ENCODE measurements at regions of chr5 and their contacts with region 1.

Region 1: GRCh38 chr5:181260387-181261319 is at the start of gene TRIM52:
- DNase-seq: peak; percentile 95 to 98 (median 97)
- H3K4me3 ChIP-seq: peak within 1 kb of the TSS; percentile 84 to 97 (median 94)
- H3K27ac ChIP-seq: peak within 1 kb of the TSS; percentile 96 to 98
- H3K4me1 ChIP-seq: peaks cover 17 to 32% (median 30%) of the 10 kb centered on the region in 4 experiments
- H3K27me3 ChIP-seq: no peaks in the 10 kb centered on the region

Region 2: GRCh38 chr5:181181650-181182565 is 78.7 kb before region 1 on chr5:
- CTCF ChIA-PET with region 1: interaction called, 11 read pairs
- POLR2A ChIA-PET with region 1: no interaction called
- DNase-seq: peak; percentile 79 to 83 (median 80)
- H3K4me3 ChIP-seq: peak overlapping the region in 1 of 7 experiments; percentile 42
- H3K27ac ChIP-seq: no peak overlapping the region
- H3K4me1 ChIP-seq: peaks cover 0 to 22% (median 14%) of the 10 kb centered on the region in 4 experiments
- H3K27me3 ChIP-seq: peaks cover 0 to 5% (median 2%) of the 10 kb centered on the region in 5 experiments

Region 3: DNA sequence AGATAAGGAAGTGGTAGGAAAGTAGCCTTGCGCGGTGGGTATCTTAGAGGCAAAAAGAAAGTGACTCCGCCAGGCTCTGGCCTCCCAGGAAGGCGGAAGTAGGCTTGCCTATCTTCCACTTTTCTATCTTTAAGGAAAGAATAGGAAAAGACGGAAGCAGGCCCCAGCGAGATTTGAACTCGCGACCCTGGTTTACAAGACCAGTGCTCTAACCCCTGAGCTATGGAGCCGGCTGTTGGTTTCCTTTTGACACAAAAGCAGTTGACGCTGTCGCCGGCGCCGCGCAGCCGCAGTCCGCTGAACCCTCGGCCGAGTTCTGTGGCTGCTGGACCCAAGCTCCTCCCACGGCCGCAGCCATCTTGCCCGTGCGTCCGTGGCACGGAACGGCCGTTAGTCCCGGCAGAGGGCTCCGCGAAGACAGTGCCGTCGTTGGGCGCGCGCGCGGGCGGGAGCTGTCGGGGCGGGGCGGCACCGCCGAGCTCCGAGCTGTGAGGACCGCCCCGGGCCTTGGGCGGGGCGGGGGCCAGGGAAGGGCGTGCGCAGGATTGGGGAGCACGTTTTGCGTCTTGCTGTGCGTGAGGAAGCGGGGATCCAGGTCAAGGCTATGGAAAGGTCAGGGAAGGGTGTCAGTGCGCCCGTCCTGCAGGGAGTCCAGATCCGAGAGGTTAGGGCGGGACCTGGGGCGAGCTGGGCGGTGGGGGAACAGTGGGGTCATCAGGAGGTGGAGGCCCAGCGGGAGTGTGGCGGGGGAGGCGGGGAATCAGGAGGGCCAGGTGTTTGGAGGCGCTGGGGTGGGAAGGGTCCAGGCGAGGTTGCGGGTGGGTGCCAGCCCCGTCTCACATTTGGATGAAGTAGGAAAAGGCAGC is 68.9 kb before region 1 on chr5:
- CTCF ChIA-PET with region 1: interaction called, 12 read pairs
- POLR2A ChIA-PET with region 1: interaction called, 6 read pairs
- DNase-seq: peak; percentile 93 to 96 (median 95)
- H3K4me3 ChIP-seq: peak overlapping the region; percentile 85 to 99 (median 91)
- H3K27ac ChIP-seq: peak overlapping the region; percentile 15 to 75
- H3K4me1 ChIP-seq: peaks cover 0 to 39% (median 28%) of the 10 kb centered on the region in 4 experiments
- H3K27me3 ChIP-seq: peaks cover 0 to 2% (median 0%) of the 10 kb centered on the region in 5 experiments

Region 4: DNA sequence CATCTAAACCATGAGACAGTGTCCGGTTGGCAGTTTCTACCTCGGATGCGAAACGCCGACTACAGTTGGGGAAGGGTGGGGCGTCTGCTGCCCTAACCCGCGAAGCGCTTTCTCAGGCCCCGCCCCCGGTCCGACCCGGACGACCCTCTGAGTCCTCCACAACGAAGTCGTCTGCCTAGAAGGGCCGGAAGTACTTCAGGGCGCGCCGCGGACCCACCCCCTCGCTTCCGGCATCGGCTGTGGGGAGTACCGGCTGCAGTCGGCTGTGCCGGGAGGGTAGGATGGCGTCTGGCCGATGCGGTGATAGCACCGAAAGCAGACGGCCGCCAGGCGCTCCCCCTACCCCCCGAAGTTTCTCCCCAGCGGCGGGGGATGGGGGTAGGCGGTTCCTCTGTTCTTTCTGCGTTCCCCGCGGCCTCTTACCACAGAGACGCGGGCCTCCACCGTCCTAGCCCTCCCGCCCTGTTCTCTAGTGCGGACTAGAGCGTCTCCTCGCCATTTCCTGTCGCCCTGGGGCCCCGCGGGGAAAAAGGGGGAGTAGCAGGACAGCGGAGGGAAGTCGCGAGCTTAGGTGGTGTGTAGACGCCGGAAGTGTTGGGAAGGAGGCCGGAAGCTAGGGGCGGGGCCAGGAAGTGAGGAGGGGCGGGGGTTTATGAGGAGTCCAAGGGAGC is 37.5 kb before region 1 on chr5 and contains the start of gene TRIM41:
- CTCF ChIA-PET with region 1: no interaction called
- POLR2A ChIA-PET with region 1: interaction called, 11 read pairs
- DNase-seq: peak; percentile 99
- H3K4me3 ChIP-seq: peak within 1 kb of the TSS; percentile 70 to 95 (median 89)
- H3K27ac ChIP-seq: peak within 1 kb of the TSS; percentile 90 to 93
- H3K4me1 ChIP-seq: peaks cover 3 to 39% (median 24%) of the 10 kb centered on the region in 4 experiments
- H3K27me3 ChIP-seq: no peaks in the 10 kb centered on the region

Region 5: DNA sequence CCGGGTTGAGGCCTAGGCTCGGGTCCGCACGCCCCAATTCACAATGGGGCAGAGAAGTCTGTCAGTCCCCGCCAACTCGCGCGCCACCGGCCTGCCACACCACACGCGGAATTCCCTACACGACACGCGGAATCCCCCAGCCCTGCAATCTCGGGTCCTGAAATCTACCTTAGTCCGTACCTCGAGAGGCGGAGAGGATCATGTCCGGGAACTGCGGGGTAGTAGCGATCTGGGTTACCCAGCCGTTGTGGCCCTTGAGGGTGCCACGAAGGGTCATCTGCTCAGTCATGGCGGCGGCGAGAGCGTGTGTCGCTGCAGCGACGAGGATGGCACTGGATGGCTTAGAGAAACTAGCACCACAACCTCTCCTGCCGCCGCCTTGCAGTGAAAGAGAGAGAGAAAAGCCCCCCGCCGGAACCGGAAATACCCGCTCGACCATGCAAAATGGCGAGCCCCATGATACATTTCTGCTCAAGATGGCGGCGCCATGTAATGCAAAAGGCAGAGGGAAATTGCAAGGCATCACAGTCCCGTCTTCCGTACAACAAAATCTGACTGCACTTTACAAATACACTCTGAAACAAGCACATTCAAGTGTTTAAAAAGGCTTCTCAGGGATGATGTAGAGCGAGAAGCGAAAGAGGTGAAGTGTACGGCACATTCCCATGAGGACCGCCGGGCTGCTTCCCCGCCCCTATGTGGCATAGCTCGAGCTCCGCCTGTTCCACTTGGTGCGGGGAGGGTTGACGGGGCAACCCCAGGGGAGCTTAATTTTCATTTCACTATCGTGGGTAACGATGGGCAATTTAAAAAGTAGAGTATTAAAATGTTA is 16.9 kb before region 1 on chr5 and contains the start of gene RACK1:
- CTCF ChIA-PET with region 1: interaction called, 23 read pairs
- POLR2A ChIA-PET with region 1: interaction called, 13 read pairs
- DNase-seq: peak; percentile 93 to 96 (median 95)
- H3K4me3 ChIP-seq: peak within 1 kb of the TSS; percentile 58 to 99 (median 98)
- H3K27ac ChIP-seq: peak within 1 kb of the TSS; percentile 92 to 96
- H3K4me1 ChIP-seq: peaks cover 15 to 58% (median 49%) of the 10 kb centered on the region in 4 experiments
- H3K27me3 ChIP-seq: no peaks in the 10 kb centered on the region

Measured in common myeloid progenitor, CD34-positive (primary cell).